ENCODE measurements at regions of chr7 and their contacts with region 1.

Region 1: GRCh38 chr7:22295402-22296264 is 61.3 kb downstream of the RAPGEF5 start:
- DNase-seq: no peak
- H3K4me3 ChIP-seq: no peak overlapping the region
- H3K27ac ChIP-seq: peak overlapping the region in 58 of 59 donors; percentile 29 to 90 (median 79)
- H3K27me3 ChIP-seq: no peaks in the 10 kb centered on the region
- CTCF ChIP-seq: peak in 52 of 56 donors; percentile 10 to 76 (median 50)

Region 2: DNA sequence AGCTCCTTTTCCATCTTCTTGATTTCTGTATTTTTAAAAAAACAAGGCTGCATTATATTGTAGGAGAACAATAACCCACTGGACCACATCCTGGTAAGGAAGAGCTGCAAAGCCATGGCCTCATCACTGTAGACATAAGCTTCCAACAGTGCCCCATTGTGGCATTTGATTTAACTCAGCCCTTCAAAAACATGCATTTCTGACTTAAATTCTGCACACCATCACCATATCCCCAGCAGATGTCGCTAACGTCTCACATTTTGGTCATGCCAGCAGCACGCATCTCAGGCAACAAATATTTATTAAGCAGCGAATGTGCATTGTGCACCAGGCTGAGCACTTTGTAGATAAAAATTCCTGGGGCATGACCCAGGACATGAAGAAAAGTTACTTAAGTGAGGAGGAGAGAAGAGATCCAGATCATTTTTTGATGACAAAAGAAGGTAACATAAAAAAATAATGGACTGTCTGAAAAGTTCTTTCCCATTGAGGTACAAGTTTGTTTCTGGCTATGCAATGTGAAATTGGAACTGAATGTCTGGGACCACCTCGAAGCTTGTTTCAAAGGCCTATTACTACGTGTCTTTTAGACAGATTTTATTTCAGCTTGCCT is 185.3 kb before region 1 on chr7:
- intact Hi-C with region 1: loop called (anchors 1 to 10 kb)
- DNase-seq: peak; percentile 36 to 92 (median 76)
- H3K4me3 ChIP-seq: peak overlapping the region in 15 of 59 donors; percentile 4 to 56 (median 22)
- H3K27ac ChIP-seq: peak overlapping the region; percentile 35 to 100 (median 99)
- H3K27me3 ChIP-seq: no peaks in the 10 kb centered on the region
- CTCF ChIP-seq: peak; percentile 75 to 99 (median 90)

Region 3: GRCh38 chr7:22255834-22256233 is 39.8 kb before region 1 on chr7:
- intact Hi-C with region 1: loop called in 1 of 2 experiments (anchors 5 kb)
- DNase-seq: no peak
- H3K4me3 ChIP-seq: peak overlapping the region in 6 of 59 donors; percentile 6 to 38 (median 11)
- H3K27ac ChIP-seq: peak overlapping the region in 57 of 59 donors; percentile 7 to 97 (median 79)
- H3K27me3 ChIP-seq: no peaks in the 10 kb centered on the region
- CTCF ChIP-seq: peak in 11 of 56 donors; percentile 10 to 40 (median 21)

Region 4: DNA sequence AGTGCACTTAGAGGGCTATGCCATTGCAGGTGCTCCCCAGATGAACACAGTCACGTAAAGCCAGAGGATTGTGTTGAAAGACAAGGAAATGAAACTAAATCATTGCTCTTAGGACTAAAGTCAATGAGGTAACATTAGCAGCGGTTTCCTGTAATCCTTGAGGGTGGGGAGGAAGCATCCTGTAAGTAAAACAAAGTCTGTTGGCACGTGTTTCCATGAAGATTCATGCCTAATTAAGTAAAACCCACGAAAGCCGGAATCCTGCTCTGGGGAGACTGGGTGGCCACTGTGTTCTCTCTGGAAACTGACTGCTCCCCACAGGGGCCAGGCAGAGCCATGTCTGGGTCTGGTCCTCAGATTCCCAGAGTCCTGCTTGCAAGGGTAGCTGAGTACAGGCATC is 186.1 kb after region 1 on chr7:
- intact Hi-C with region 1: loop called in 1 of 2 experiments (anchors 5 kb)
- DNase-seq: no peak
- H3K4me3 ChIP-seq: no peak overlapping the region
- H3K27ac ChIP-seq: peak overlapping the region in 1 of 59 donors; percentile 26
- H3K27me3 ChIP-seq: no peaks in the 10 kb centered on the region
- CTCF ChIP-seq: no peak

Region 5: DNA sequence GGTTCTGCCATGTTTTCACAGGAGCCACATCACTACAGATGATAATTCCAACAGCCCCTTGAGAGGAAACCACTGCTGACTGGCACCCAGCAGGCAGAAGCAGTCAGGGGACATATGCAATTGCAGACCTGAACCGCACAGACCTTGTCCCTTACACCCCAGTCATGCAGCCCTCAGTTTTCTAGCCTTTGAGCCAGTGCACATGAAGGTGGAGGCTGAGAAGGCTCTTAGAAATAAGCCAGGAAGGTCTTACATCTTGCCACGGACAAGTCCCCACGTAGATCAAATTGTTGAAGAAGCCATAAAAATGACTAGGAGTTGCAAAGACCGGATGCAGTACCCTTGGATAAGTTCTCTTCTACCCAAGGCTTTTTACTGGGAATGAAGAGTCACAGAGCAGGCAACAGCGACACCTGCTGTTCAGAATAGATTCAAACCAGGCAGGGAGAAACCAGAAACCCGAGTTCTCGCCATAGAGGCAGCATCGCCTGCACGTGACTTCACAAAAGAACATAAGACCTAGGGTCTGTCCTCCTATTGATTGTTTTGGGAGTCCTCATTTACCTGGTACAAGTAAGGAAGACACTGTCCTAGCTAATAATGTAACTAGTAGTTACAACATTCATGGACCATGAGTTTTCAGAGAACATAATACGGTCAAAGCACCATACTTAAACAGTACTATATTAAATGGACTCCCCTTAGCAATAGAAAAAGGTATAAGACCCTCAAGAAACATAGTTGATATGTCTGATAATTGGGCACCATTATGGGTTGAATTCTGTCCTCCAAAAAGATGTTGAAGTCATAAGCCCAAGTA is 193.2 kb after region 1 on chr7:
- intact Hi-C with region 1: loop called (anchors 1 to 5 kb)
- DNase-seq: peak; percentile 58 to 88 (median 76)
- H3K4me3 ChIP-seq: peak overlapping the region in 2 of 59 donors; percentile 1 to 30
- H3K27ac ChIP-seq: peak overlapping the region in 29 of 59 donors; percentile 3 to 78 (median 33)
- H3K27me3 ChIP-seq: no peaks in the 10 kb centered on the region
- CTCF ChIP-seq: peak; percentile 90 to 99 (median 97)

Measured in dorsolateral prefrontal cortex (tissue), 120 donors.